Ovary (tissue), 10 donors: ENCODE measurements at regions of chrX and their contacts with region 1.

Region 1: DNA sequence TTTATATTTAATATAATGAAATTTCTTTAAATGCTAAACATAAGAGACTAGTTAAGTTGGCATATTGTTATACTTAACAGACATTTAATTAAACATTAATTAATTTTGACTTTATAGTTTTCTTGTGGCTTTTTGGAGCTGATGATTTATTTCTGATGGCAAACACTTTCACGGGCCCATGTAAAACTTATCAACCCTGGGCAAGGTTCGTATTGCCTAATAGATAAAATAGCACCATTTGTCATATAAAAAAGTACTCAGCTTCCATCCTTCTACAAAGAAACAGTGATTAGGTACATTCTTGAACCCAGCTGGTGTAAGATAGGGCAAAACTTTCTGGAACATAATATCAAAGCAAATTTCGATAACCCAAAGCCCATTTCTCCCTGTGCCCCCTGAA is 63.2 kb downstream of the PAK3 start:
- DNase-seq: no peak
- H3K4me3 ChIP-seq: no peak overlapping the region
- H3K27ac ChIP-seq: no peak overlapping the region
- H3K4me1 ChIP-seq: no peaks in the 10 kb centered on the region
- H3K27me3 ChIP-seq: no peaks in the 10 kb centered on the region
- CTCF ChIP-seq: no peak
- EP300 ChIP-seq: no peak
- POLR2A ChIP-seq: no peak

Region 2: GRCh38 chrX:110759785-110760184 is 399.4 kb before region 1 on chrX:
- intact Hi-C with region 1: loop called in 1 of 4 experiments (anchors 5 kb)
- DNase-seq: no peak
- H3K4me3 ChIP-seq: no peak overlapping the region
- H3K27ac ChIP-seq: no peak overlapping the region
- H3K4me1 ChIP-seq: no peaks in the 10 kb centered on the region
- H3K27me3 ChIP-seq: no peaks in the 10 kb centered on the region
- CTCF ChIP-seq: no peak
- EP300 ChIP-seq: no peak
- POLR2A ChIP-seq: no peak

Region 3: DNA sequence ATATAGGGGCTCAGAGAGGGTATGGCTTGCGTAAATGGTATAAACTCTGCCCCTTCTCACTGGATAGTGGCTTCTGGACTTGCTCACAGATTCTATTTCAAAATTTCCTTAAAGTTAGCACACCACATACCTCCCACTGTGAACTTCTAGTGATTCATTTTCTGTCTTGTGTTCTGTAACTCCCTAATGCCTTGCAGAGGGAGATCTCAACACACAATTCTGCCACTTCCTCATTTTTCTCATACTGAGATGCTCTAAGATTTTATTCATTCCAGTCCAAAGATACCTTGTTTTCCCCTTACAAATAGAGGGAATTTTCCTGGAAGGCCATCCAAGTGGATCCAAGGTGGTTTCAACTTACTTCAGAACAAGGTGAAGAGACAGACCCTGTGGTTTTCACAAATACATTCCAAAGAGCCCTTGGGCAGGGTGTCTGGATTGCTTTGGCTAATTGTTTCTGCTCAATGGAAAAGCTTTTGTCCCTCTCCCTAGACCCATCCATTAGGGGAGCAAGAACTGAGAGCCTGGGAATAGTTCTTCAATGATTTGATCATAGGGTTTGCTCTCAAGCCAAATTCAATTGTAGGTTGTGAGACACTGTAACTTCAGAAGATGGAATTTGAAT is 163.1 kb after region 1 on chrX:
- intact Hi-C with region 1: no loop called
- DNase-seq: no peak
- H3K4me3 ChIP-seq: no peak overlapping the region
- H3K27ac ChIP-seq: no peak overlapping the region
- H3K4me1 ChIP-seq: no peaks in the 10 kb centered on the region
- H3K27me3 ChIP-seq: no peaks in the 10 kb centered on the region
- CTCF ChIP-seq: no peak
- EP300 ChIP-seq: no peak
- POLR2A ChIP-seq: no peak